ENCODE measurements at regions of chr10 and their contacts with region 1.

Region 1: GRCh38 chr10:3467052-3467951 is 294.7 kb upstream of the PITRM1 start:
- H3K4me3 Mint-ChIP-seq: peak overlapping the region; percentile 82
- H3K27ac Mint-ChIP-seq: peak overlapping the region; percentile 99
- H3K4me1 Mint-ChIP-seq: peaks cover 68% of the 10 kb centered on the region
- H3K27me3 Mint-ChIP-seq: no peaks in the 10 kb centered on the region

Region 2: GRCh38 chr10:3426190-3426701 is 41.1 kb before region 1 on chr10:
- intact Hi-C with region 1: no loop called
- H3K4me3 Mint-ChIP-seq: no peak overlapping the region
- H3K27ac Mint-ChIP-seq: no peak overlapping the region
- H3K4me1 Mint-ChIP-seq: peaks cover 20% of the 10 kb centered on the region
- H3K27me3 Mint-ChIP-seq: peaks cover 8% of the 10 kb centered on the region

Region 3: DNA sequence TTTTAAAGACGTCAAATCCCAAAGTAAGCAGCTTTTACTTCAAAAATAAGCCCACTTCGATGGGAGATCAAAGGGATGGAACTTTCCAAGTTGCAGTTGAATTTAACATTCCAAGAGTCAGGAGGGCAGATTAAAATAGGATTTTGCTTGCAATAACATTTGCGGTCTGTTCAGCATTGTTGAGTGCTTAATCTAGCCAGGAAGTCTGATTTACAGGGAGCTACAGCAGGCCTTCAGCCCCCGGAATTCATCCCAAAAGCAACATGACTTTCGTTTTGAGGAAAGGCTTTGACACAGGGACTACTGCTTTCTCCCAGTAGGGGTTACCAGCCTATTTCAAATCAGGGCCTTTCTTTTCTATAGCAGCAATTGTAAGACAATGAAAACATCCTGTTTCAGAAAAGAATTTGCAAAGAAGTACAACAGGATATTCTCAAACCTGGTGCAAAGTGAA is 15.1 kb before region 1 on chr10:
- intact Hi-C with region 1: no loop called
- H3K4me3 Mint-ChIP-seq: no peak overlapping the region
- H3K27ac Mint-ChIP-seq: no peak overlapping the region
- H3K4me1 Mint-ChIP-seq: peaks cover 15% of the 10 kb centered on the region
- H3K27me3 Mint-ChIP-seq: peaks cover 3% of the 10 kb centered on the region

Region 4: DNA sequence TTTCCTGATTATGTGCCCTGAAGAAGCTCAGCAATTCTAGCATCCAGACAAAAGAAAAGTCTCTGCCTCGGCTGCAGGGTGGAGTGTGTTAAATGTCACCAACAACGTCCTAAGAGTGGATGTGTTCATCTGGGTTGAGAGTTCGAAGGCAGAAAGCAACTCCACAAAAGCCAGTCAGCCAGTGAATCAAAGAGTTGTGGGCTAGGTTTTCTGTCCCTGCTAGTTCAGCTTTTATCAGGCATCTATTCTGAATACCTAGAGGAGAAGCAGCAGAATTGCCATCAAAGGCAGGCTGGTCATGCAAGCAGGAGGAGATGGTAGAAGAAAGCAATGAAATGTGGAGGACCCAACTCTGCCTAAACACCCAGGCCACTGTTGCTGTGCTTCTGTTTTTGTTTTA is 112.5 kb after region 1 on chr10:
- intact Hi-C with region 1: loop called (anchors 5 kb)
- H3K4me3 Mint-ChIP-seq: peak overlapping the region; percentile 27
- H3K27ac Mint-ChIP-seq: peak overlapping the region; percentile 90
- H3K4me1 Mint-ChIP-seq: peaks cover 51% of the 10 kb centered on the region
- H3K27me3 Mint-ChIP-seq: no peaks in the 10 kb centered on the region

Region 5: DNA sequence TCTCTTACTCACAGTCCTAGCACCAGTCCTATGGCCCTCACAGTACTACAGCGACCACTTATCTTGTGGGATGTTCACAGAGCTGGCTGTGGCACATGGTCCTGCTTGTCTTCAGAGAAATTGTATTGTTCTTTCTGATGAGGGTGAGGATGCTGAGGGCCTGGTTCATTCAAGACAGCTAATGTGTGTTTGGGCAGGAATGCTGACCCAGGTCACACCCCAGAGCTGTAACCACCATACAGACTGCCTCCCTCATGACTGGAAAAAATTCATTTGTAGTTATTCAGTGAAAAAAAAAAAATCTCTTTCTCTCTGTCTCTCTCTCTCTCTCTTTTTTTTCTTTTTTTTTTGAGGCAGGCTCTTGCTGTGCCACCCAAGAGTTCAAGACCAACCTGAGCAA is 234.2 kb after region 1 on chr10:
- intact Hi-C with region 1: no loop called
- H3K4me3 Mint-ChIP-seq: no peak overlapping the region
- H3K27ac Mint-ChIP-seq: no peak overlapping the region
- H3K4me1 Mint-ChIP-seq: peaks cover 8% of the 10 kb centered on the region
- H3K27me3 Mint-ChIP-seq: peaks cover 5% of the 10 kb centered on the region

Region 6: GRCh38 chr10:3761021-3761686 is 293.9 kb after region 1 on chr10:
- intact Hi-C with region 1: loop called (anchors 5 kb)
- H3K4me3 Mint-ChIP-seq: peak overlapping the region; percentile 63
- H3K27ac Mint-ChIP-seq: peak overlapping the region; percentile 93
- H3K4me1 Mint-ChIP-seq: peaks cover 87% of the 10 kb centered on the region
- H3K27me3 Mint-ChIP-seq: no peaks in the 10 kb centered on the region

Region 7: GRCh38 chr10:3776796-3777571 is 309.7 kb after region 1 on chr10:
- intact Hi-C with region 1: loop called (anchors 2 kb)
- H3K4me3 Mint-ChIP-seq: peak overlapping the region; percentile 56
- H3K27ac Mint-ChIP-seq: peak overlapping the region; percentile 99
- H3K4me1 Mint-ChIP-seq: peaks cover 66% of the 10 kb centered on the region
- H3K27me3 Mint-ChIP-seq: no peaks in the 10 kb centered on the region

Region 8: DNA sequence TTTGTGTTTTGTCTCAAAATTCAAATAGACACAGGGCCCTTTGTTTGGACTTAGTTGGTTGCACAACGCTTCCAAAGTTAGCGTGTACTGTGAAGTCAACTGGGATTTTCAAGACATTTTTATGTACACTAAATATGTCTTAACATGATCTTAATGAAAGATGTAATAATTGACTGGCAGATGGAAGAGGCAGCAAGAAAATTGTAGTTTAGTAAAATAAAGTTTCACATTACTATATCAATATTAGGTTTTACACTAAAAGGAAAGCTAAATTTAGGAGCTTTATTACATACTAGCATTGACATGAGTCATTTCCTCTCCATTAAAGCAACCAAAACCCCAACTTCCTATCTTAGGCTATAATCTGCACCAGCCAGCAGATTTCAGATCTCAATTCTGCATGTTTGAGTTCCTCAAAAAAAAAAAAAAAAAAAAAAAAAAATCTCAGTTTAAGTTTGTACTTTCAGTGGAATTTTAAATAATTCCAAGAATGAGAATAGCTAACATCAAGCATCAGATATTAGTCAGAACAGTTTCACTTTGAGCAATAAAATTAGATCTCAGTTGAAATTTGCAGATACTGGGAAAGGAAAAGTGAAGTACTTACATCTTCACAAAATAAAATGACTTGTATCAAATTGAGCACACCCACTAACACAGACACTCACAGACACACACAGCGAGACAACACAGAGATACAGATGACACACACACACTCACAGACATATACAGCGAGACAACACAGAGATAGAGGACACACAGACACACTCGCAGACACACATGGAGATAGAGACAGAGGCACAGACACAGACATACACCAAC is 664.3 kb after region 1 on chr10:
- intact Hi-C with region 1: loop called (anchors 5 kb)
- H3K4me3 Mint-ChIP-seq: no peak overlapping the region
- H3K27ac Mint-ChIP-seq: no peak overlapping the region
- H3K4me1 Mint-ChIP-seq: peaks cover 18% of the 10 kb centered on the region
- H3K27me3 Mint-ChIP-seq: no peaks in the 10 kb centered on the region

Measured in dendritic cell treated with granulocyte-macrophage colony-stimulating factor and Interleukin-4, amounts not matched to agents 40 ng/mL and 50 ng/mL, for 4 days (primary cell).